A549 (cell line): ENCODE measurements at regions of chr9 and their contacts with region 1.

Region 1: GRCh38 chr9:97598461-97599288 is 34.5 kb downstream of the TSTD2 start:
- DNase-seq: peak; percentile 61 to 81
- ATAC-seq: peak; percentile 89 to 94
- H3K4me3 ChIP-seq: no peak overlapping the region
- H3K27ac ChIP-seq: no peak overlapping the region
- H3K4me1 ChIP-seq: no peaks in the 10 kb centered on the region
- CTCF ChIP-seq: peak; percentile 83
- EP300 ChIP-seq: no peak
- POLR2A ChIP-seq: no peak
- RAD21 ChIP-seq: peak; percentile 72 to 75

Region 2: GRCh38 chr9:96854073-96854876 is 744.4 kb before region 1 on chr9 and contains the start of gene ZNF782:
- CTCF ChIA-PET with region 1: interaction called, 18 read pairs
- POLR2A ChIA-PET with region 1: no interaction called
- DNase-seq: peak; percentile 83 to 95
- ATAC-seq: peak; percentile 94 to 99
- H3K4me3 ChIP-seq: peak within 1 kb of the TSS; percentile 65
- H3K27ac ChIP-seq: peak within 1 kb of the TSS; percentile 69 to 89
- H3K4me1 ChIP-seq: no peaks in the 10 kb centered on the region; the same call in 2 of the 3 replicates
- CTCF ChIP-seq: no peak
- EP300 ChIP-seq: no peak
- POLR2A ChIP-seq: peak; percentile 65
- RAD21 ChIP-seq: no peak
- polyA plus RNA-seq, gene ZNF782: 2.1 and 2.7 TPM in 2 replicates

Region 3: DNA sequence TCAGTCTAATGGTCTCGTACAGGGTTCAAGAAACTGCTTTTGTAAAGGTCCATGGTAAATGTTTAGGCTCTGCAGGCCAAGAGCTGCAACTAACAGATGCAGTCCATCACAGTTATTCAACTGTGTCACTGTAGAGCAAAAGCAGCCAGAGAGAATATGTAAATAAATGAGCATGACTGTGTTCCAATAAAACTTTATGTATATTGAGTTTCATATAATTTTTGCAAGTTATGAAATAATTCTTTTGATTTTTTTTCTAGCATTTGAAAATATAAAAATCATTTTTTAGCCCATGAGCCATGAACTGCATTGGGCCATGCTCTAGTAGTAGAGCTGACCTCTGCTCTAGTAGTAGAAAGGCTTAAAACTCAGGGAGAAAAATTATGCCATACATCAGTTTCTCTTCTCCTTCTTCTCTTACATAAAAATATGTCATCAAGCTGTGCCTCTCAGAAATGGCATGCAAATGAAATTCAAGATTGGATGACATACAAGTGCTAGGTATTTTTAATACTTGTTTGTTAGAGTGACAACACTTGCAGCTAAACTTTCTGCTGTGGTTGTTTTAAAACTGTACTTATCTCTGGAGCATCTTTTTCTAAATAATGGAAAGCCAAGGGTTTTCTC is 139.5 kb before region 1 on chr9:
- CTCF ChIA-PET with region 1: interaction called, 340 read pairs
- POLR2A ChIA-PET with region 1: no interaction called
- DNase-seq: no peak
- ATAC-seq: no peak
- H3K4me3 ChIP-seq: no peak overlapping the region
- H3K27ac ChIP-seq: no peak overlapping the region
- H3K4me1 ChIP-seq: no peaks in the 10 kb centered on the region
- CTCF ChIP-seq: no peak
- EP300 ChIP-seq: no peak
- POLR2A ChIP-seq: no peak
- RAD21 ChIP-seq: no peak

Region 4: GRCh38 chr9:97501177-97501971 is 97.3 kb before region 1 on chr9 and contains the start of gene TMOD1:
- CTCF ChIA-PET with region 1: interaction called, 29 read pairs
- POLR2A ChIA-PET with region 1: no interaction called
- DNase-seq: peak; percentile 45 to 83
- ATAC-seq: peak; percentile 86 to 90
- H3K4me3 ChIP-seq: peak within 1 kb of the TSS; percentile 85
- H3K27ac ChIP-seq: peak within 1 kb of the TSS; percentile 62 to 86
- H3K4me1 ChIP-seq: peaks cover 5% of the 10 kb centered on the region; the same call in 2 of the 3 replicates
- CTCF ChIP-seq: peak; percentile 58
- EP300 ChIP-seq: no peak
- POLR2A ChIP-seq: no peak
- RAD21 ChIP-seq: peak; percentile 8 to 34; a peak in 2 of 5 replicates
- polyA plus RNA-seq, gene TMOD1: 0.28 and 0.48 TPM in 2 replicates

Region 5: GRCh38 chr9:97559111-97559514 is 39.6 kb before region 1 on chr9:
- CTCF ChIA-PET with region 1: interaction called, 13 read pairs
- POLR2A ChIA-PET with region 1: interaction called, 3 read pairs
- DNase-seq: no peak
- ATAC-seq: no peak
- H3K4me3 ChIP-seq: no peak overlapping the region
- H3K27ac ChIP-seq: no peak overlapping the region
- H3K4me1 ChIP-seq: peaks cover 4% of the 10 kb centered on the region; the same call in 2 of the 3 replicates
- CTCF ChIP-seq: no peak
- EP300 ChIP-seq: no peak
- POLR2A ChIP-seq: no peak
- RAD21 ChIP-seq: no peak

Region 6: DNA sequence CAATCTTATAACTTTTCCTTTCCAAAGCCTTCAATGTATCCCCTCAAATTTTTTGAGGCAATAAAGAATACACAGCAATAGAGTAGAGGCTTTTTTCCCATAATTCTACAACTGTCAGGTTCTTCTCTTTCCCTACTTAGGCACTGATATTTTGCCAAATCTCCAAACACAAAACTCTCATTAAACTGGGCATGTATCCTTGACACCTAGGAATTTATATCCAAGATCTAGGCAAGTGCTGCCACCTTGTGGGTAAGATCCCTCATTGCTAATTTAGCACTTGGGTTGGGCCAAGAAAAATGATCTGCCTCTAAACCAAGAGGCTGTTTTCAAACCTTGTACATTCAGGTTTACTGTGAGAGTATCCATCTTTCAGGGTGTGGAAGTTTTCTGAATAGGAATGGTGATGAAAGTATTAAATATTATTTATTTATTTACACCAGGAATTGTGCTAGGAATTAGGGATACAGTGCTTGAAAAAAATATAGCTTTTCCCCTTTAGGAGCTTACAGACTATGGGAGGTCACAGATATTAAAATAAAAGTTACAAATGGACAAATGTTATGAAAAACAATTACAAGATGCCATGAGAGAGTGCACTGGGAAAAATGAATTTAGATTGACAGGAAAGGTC is 16.9 kb after region 1 on chr9:
- CTCF ChIA-PET with region 1: interaction called, 179 read pairs
- POLR2A ChIA-PET with region 1: no interaction called
- DNase-seq: peak; percentile 64 to 69
- ATAC-seq: peak; percentile 68 to 84; a peak in 4 of 6 replicates
- H3K4me3 ChIP-seq: no peak overlapping the region
- H3K27ac ChIP-seq: no peak overlapping the region
- H3K4me1 ChIP-seq: no peaks in the 10 kb centered on the region
- CTCF ChIP-seq: peak; percentile 88
- EP300 ChIP-seq: no peak
- POLR2A ChIP-seq: no peak
- RAD21 ChIP-seq: peak; percentile 74 to 81